Right lobe of liver (tissue), 6 donors: ENCODE measurements at regions of chr7 and their contacts with region 1.

Region 1: GRCh38 chr7:12174931-12175330 is 36.2 kb upstream of the TMEM106B start:
- DNase-seq: no peak
- ATAC-seq: no peak
- H3K4me3 ChIP-seq: no peak overlapping the region
- H3K27ac ChIP-seq: no peak overlapping the region
- H3K4me1 ChIP-seq: no peaks in the 10 kb centered on the region
- H3K27me3 ChIP-seq: no peaks in the 10 kb centered on the region
- CTCF ChIP-seq: no peak
- POLR2A ChIP-seq: no peak

Region 2: DNA sequence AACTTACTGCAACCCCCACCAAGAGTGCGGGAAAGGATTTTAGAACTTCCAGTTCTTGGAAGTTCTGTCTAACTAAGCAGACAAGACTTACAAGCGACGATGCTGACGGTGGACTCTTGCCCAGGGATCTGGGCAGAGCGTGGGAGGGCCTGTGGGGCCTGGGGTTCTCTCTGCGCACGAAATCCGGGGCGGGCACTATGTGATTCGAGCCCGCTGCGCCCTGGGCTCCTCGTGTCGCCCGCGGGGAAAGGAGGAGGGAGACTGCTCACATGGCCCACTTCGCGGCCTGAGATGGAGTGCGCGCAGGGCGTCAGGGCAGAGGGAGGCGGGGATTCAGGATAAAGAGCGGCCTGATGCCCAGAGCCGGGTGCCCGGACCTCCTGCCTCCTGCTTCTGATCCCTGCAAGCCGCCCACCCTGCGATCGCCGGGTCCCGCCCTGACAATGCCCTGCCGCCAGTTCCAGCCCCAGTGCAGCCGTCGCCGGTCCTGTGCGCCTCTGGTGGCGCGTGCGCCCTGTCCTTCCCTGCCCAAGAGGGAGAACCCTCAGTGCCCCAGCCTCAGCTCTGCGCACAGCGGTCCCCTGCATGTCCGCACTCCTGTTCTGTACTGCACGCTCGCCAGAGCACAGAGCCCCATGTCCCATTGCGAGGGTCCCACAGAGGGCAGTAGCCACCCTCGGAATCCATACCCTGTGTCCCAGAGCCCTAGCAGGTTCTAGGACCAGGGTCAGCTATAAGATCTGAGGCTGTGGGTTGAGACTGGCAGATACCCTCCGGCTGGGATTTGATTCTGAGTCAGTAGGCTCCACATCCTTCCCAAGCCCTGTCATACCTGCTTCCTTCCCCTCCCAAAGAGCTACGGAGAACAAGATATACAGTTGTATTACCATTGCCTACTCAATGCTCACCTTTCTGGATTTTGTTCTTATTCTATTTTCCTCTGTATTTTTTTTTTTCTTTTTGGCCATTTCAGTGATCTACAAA is 63.2 kb before region 1 on chr7:
- intact Hi-C with region 1: loop called in 1 of 2 experiments (anchors 10 kb)
- DNase-seq: peak in 1 of 3 donors; percentile 52
- ATAC-seq: peak; percentile 14 to 50 (median 30)
- H3K4me3 ChIP-seq: no peak overlapping the region
- H3K27ac ChIP-seq: no peak overlapping the region
- H3K4me1 ChIP-seq: no peaks in the 10 kb centered on the region
- H3K27me3 ChIP-seq: no peaks in the 10 kb centered on the region
- CTCF ChIP-seq: no peak
- POLR2A ChIP-seq: no peak